ENCODE measurements at regions of chr2 and their contacts with region 1.

Region 1: DNA sequence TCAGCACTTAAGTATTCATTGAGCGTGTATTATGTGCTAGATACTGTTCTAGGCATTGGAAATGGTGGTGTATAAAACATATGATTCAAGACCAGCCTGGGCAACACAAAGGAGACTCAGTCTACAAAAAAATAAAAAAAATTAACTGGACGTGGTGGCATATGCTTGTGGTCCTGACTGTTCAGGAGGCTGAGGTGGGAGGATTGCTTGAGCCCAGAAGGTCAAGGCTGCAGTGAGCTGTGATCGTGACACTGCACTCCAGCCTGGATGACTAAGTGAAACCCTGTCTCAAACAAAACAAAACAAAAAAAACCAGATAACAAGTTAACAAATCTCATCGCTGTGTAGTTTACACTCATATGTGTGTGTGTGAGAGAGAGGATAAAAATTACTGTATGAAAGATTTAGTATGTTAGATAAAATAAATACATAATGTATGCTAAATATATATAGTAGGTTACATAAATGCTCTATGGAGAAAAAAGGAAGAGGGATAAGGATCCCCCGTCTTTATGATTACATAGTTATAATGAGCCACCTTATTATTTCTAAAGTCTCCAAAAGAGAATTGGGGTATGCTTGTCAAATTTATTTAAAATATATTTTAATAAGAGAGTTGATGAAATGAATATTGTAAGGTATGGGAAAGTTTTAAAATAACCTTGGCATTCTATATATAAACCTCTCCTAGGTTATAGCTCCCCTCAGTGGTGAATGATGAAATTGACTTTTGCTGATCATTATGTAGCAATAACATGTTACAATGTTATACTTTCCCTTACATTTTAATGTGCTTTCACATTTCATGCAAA is 69.2 kb downstream of the EHBP1 start:
- DNase-seq: no peak
- H3K4me3 ChIP-seq: no peak overlapping the region
- H3K27ac ChIP-seq: peak overlapping the region in 2 of 4 donors; percentile 15 to 29
- H3K4me1 ChIP-seq: peaks cover 0 to 12% (median 2%) of the 10 kb centered on the region in 4 donors
- H3K27me3 ChIP-seq: no peaks in the 10 kb centered on the region
- CTCF ChIP-seq: peak; percentile 73 to 84 (median 78)
- EP300 ChIP-seq: no peak
- POLR2A ChIP-seq: no peak

Region 2: GRCh38 chr2:62456721-62457539 is 317.8 kb before region 1 on chr2:
- in situ Hi-C with region 1: loop called (anchors 5 kb)
- intact Hi-C with region 1: no loop called
- DNase-seq: peak; percentile 70
- H3K4me3 ChIP-seq: peak overlapping the region; percentile 47 to 64 (median 54)
- H3K27ac ChIP-seq: peak overlapping the region; percentile 70 to 82 (median 76)
- H3K4me1 ChIP-seq: peaks cover 4 to 14% (median 8%) of the 10 kb centered on the region in 4 donors
- H3K27me3 ChIP-seq: no peaks in the 10 kb centered on the region
- CTCF ChIP-seq: peak; percentile 98 to 99 (median 99)
- EP300 ChIP-seq: no peak
- POLR2A ChIP-seq: no peak

Region 3: GRCh38 chr2:62705007-62705829 is 69.5 kb before region 1 on chr2 and contains the start of gene EHBP1:
- in situ Hi-C with region 1: no loop called
- intact Hi-C with region 1: loop called (anchors 10 kb)
- DNase-seq: peak; percentile 99
- H3K4me3 ChIP-seq: peak within 1 kb of the TSS; percentile 75 to 92 (median 86)
- H3K27ac ChIP-seq: peak within 1 kb of the TSS; percentile 92 to 97 (median 93)
- H3K4me1 ChIP-seq: peaks cover 4 to 36% (median 25%) of the 10 kb centered on the region in 4 donors
- H3K27me3 ChIP-seq: no peaks in the 10 kb centered on the region
- CTCF ChIP-seq: no peak
- EP300 ChIP-seq: no peak
- POLR2A ChIP-seq: peak; percentile 86
- total RNA-seq, gene EHBP1: 41.1 to 69.4 (median 47.0) TPM

Region 4: DNA sequence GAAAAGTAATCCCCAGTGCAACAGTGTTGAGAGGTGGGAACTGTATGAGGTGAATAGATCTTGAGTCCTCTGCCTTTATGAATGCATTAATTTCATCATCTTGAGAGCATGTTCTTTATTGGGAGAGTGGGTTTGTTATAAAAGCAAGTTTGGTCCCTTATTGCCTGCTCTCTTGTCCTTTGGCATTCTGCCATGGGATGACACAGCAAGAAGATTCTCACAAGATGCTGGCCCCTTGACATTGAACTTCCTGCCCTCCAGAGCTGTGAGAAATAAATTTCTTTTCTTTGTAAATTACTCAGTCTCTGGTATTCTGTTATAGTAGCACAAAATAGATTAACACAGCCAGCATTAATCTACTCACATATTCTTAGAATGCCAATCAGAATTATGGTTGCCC is 39.4 kb after region 1 on chr2:
- in situ Hi-C with region 1: no loop called
- intact Hi-C with region 1: no loop called
- DNase-seq: no peak
- H3K4me3 ChIP-seq: no peak overlapping the region
- H3K27ac ChIP-seq: no peak overlapping the region
- H3K4me1 ChIP-seq: peaks cover 0 to 8% (median 0%) of the 10 kb centered on the region in 4 donors
- H3K27me3 ChIP-seq: no peaks in the 10 kb centered on the region
- CTCF ChIP-seq: no peak
- EP300 ChIP-seq: no peak
- POLR2A ChIP-seq: no peak

Region 5: GRCh38 chr2:62947403-62947802 is 172.6 kb after region 1 on chr2:
- in situ Hi-C with region 1: no loop called
- intact Hi-C with region 1: no loop called
- DNase-seq: no peak
- H3K4me3 ChIP-seq: no peak overlapping the region
- H3K27ac ChIP-seq: no peak overlapping the region
- H3K4me1 ChIP-seq: no peaks in the 10 kb centered on the region
- H3K27me3 ChIP-seq: no peaks in the 10 kb centered on the region
- CTCF ChIP-seq: no peak
- EP300 ChIP-seq: no peak
- POLR2A ChIP-seq: no peak

Measured in transverse colon (tissue), 4 donors.